ENCODE measurements at regions of chr5 and their contacts with region 1.

Region 1: GRCh38 chr5:120803282-120803681 is 339.2 kb downstream of the PRR16 start:
- DNase-seq: no peak
- ATAC-seq: no peak
- H3K4me3 Mint-ChIP-seq: no peak overlapping the region
- H3K27ac Mint-ChIP-seq: no peak overlapping the region
- H3K4me1 Mint-ChIP-seq: no peaks in the 10 kb centered on the region
- H3K27me3 Mint-ChIP-seq: no peaks in the 10 kb centered on the region
- CTCF ChIP-seq: no peak

Region 2: GRCh38 chr5:119943148-119943547 is 860.1 kb before region 1 on chr5:
- CTCF ChIA-PET with region 1: no interaction called
- POLR2A ChIA-PET with region 1: no interaction called
- intact Hi-C with region 1: loop called (anchors 10 kb)
- DNase-seq: no peak
- ATAC-seq: no peak
- H3K4me3 Mint-ChIP-seq: no peak overlapping the region
- H3K27ac Mint-ChIP-seq: no peak overlapping the region
- H3K4me1 Mint-ChIP-seq: no peaks in the 10 kb centered on the region
- H3K27me3 Mint-ChIP-seq: no peaks in the 10 kb centered on the region
- CTCF ChIP-seq: no peak

Region 3: DNA sequence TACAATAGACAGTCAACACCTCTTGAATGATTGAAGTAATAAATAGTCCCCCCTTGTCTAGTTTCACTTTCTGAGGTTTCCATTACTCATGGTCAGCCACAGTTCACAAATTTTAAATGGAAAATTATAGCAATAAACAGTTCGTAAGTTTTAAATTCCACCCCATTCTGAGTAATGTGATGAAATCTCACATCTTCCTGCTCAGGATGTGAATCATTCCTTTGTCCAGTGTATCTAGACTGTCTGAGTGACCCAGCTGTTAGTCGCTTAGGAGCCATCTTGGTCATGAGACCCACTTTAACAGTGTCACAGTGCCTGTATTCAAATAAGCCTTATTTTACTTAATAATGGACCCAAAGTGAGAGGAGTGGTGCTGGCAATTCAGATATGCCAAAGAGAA is 650.8 kb before region 1 on chr5:
- CTCF ChIA-PET with region 1: no interaction called
- POLR2A ChIA-PET with region 1: no interaction called
- intact Hi-C with region 1: no loop called
- DNase-seq: no peak
- ATAC-seq: no peak
- H3K4me3 Mint-ChIP-seq: no peak overlapping the region
- H3K27ac Mint-ChIP-seq: no peak overlapping the region
- H3K4me1 Mint-ChIP-seq: no peaks in the 10 kb centered on the region
- H3K27me3 Mint-ChIP-seq: no peaks in the 10 kb centered on the region
- CTCF ChIP-seq: no peak

Region 4: GRCh38 chr5:120217021-120217420 is 586.3 kb before region 1 on chr5:
- CTCF ChIA-PET with region 1: no interaction called
- POLR2A ChIA-PET with region 1: no interaction called
- intact Hi-C with region 1: no loop called
- DNase-seq: no peak
- ATAC-seq: no peak
- H3K4me3 Mint-ChIP-seq: no peak overlapping the region
- H3K27ac Mint-ChIP-seq: no peak overlapping the region
- H3K4me1 Mint-ChIP-seq: no peaks in the 10 kb centered on the region
- H3K27me3 Mint-ChIP-seq: no peaks in the 10 kb centered on the region
- CTCF ChIP-seq: no peak

Measured in activated B cell treated with CpG ODN at 0.5 μM for 24 hours (primary cell).